Natural killer cell (primary cell): ENCODE measurements at regions of chrX and their contacts with region 1.

Region 1: GRCh38 chrX:15143050-15143824 is 126.6 kb downstream of the ASB9 start:
- DNase-seq: peak in 1 of 2 donors; percentile 74
- ATAC-seq: peak; percentile 54 to 68 (median 61)
- H3K4me3 ChIP-seq: no peak overlapping the region
- H3K4me3 Mint-ChIP-seq: no peak overlapping the region
- H3K27ac ChIP-seq: no peak overlapping the region
- H3K27ac Mint-ChIP-seq: no peak overlapping the region
- H3K4me1 ChIP-seq: peaks cover 6% of the 10 kb centered on the region
- H3K4me1 Mint-ChIP-seq: peaks cover 0 to 12% of the 10 kb centered on the region in 2 donors
- H3K27me3 ChIP-seq: no peaks in the 10 kb centered on the region
- H3K27me3 Mint-ChIP-seq: no peaks in the 10 kb centered on the region
- CTCF ChIP-seq: peak; percentile 60

Region 2: DNA sequence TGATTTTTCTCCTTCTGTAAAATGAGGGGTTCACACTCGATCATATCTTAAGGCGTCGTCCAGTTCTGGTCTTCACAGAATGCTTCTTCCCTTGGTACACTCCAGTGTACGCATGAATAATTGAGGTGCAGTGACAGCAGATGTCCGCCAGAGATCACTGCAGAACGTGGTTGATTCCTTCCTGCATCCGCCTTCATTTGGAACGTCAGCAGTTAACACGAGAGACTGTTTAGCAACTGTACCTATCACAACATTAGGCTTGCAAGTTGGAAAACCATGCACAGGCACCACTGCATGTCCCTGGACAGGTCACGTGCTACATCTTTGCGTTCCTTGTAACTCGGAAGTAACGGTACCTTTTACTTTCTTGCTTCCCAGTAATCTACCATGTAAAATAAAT is 1047.5 kb before region 1 on chrX:
- intact Hi-C with region 1: loop called (anchors 2 kb)
- DNase-seq: peak in 1 of 2 donors; percentile 65
- ATAC-seq: peak; percentile 55 to 73 (median 57)
- H3K4me3 ChIP-seq: no peak overlapping the region
- H3K4me3 Mint-ChIP-seq: peak overlapping the region; percentile 17
- H3K27ac ChIP-seq: no peak overlapping the region
- H3K27ac Mint-ChIP-seq: no peak overlapping the region
- H3K4me1 ChIP-seq: peaks cover 2% of the 10 kb centered on the region
- H3K4me1 Mint-ChIP-seq: no peaks in the 10 kb centered on the region
- H3K27me3 ChIP-seq: no peaks in the 10 kb centered on the region
- H3K27me3 Mint-ChIP-seq: peaks cover 0 to 18% of the 10 kb centered on the region in 2 donors
- CTCF ChIP-seq: no peak